ENCODE measurements at regions of chr2 and their contacts with region 1.

Region 1: GRCh38 chr2:218466016-218466521 is 47.1 kb downstream of the VIL1 start:
- DNase-seq: no peak
- ATAC-seq: no peak
- H3K4me3 Mint-ChIP-seq: no peak overlapping the region
- H3K27ac Mint-ChIP-seq: no peak overlapping the region
- H3K4me1 Mint-ChIP-seq: peaks cover 4% of the 10 kb centered on the region
- H3K27me3 Mint-ChIP-seq: no peaks in the 10 kb centered on the region
- CTCF ChIP-seq: peak; percentile 60

Region 2: DNA sequence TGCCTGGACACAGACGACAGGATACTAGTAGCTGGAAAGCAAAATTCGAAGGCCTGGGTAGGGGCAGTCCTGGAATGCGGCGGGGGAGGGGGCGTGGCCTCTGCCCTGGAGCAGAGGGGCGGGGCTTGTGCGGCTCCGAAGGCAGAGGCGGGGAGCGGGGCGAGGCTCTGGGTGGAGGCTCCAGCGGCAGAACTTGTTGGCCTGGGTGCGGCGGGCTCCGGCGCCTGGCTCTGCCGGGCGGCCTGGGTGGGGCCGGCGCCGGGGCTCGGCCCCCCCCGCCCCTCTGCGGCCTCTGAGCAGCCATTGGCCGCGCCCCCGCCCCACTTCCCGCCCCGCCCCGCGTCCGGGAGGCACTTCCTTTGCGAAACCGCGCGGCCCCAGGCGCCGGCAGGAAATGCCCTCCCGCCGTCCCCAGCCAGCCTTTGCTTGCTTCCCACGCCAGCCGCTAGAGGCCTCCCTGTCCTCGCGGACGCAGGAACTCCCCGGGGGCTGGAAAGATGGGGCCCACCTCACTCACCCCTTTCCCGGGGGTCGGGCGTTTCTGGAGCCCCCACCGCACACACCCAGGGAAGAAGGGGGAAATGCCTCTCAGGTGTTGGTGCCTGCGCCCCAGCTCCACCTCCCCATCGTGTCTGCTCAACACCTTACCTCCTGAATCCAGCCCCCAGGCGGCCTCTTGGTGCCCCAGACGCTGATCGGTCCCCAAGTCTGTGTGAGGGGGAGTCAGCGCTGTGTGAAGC is 59.7 kb before region 1 on chr2:
- CTCF ChIA-PET with region 1: no interaction called
- POLR2A ChIA-PET with region 1: no interaction called
- intact Hi-C with region 1: loop called (anchors 10 kb)
- DNase-seq: peak; percentile 97
- ATAC-seq: peak; percentile 86
- H3K4me3 Mint-ChIP-seq: peak overlapping the region; percentile 66
- H3K27ac Mint-ChIP-seq: peak overlapping the region; percentile 72
- H3K4me1 Mint-ChIP-seq: peaks cover 44% of the 10 kb centered on the region
- H3K27me3 Mint-ChIP-seq: peaks cover 6% of the 10 kb centered on the region
- CTCF ChIP-seq: peak; percentile 65

Region 3: GRCh38 chr2:218659258-218659987 is 193.4 kb after region 1 on chr2 and contains the starts of genes BCS1L and ZNF142:
- CTCF ChIA-PET with region 1: no interaction called
- POLR2A ChIA-PET with region 1: no interaction called
- intact Hi-C with region 1: no loop called
- DNase-seq: peak; percentile 99
- ATAC-seq: peak; percentile 97
- H3K4me3 Mint-ChIP-seq: peak within 1 kb of the TSS; percentile 92
- H3K27ac Mint-ChIP-seq: peak within 1 kb of the TSS; percentile 92
- H3K4me1 Mint-ChIP-seq: peaks cover 29% of the 10 kb centered on the region
- H3K27me3 Mint-ChIP-seq: no peaks in the 10 kb centered on the region
- CTCF ChIP-seq: no peak
- total RNA-seq, gene BCS1L: 69.6 to 76.3 TPM
- total RNA-seq, gene ZNF142: 30.4 to 33.7 TPM